HEK293 (cell line): ENCODE measurements at regions of chr3 and their contacts with region 1.

Region 1: GRCh38 chr3:71968544-71968943 is 183.6 kb upstream of the PROK2 start:
- H3K4me3 ChIP-seq: no peak overlapping the region
- H3K27ac ChIP-seq: no peak overlapping the region
- H3K4me1 ChIP-seq: peaks cover 3% of the 10 kb centered on the region
- CTCF ChIP-seq: no peak

Region 2: GRCh38 chr3:71831599-71831998 is 136.9 kb before region 1 on chr3:
- CTCF ChIA-PET with region 1: no interaction called
- POLR2A ChIA-PET with region 1: no interaction called
- H3K4me3 ChIP-seq: no peak overlapping the region
- H3K27ac ChIP-seq: no peak overlapping the region
- H3K4me1 ChIP-seq: no peaks in the 10 kb centered on the region
- CTCF ChIP-seq: no peak

Region 3: GRCh38 chr3:72162649-72163184 is 194.2 kb after region 1 on chr3:
- CTCF ChIA-PET with region 1: no interaction called
- POLR2A ChIA-PET with region 1: interaction called, 11 read pairs
- H3K4me3 ChIP-seq: no peak overlapping the region
- H3K27ac ChIP-seq: no peak overlapping the region
- H3K4me1 ChIP-seq: 0 out of 2 replicates have a peak, but pooled peaks cover 2% of the 10 kb centered on the region
- CTCF ChIP-seq: no peak